OCI-LY7 (cell line): ENCODE measurements at regions of chr3 and their contacts with region 1.

Region 1: DNA sequence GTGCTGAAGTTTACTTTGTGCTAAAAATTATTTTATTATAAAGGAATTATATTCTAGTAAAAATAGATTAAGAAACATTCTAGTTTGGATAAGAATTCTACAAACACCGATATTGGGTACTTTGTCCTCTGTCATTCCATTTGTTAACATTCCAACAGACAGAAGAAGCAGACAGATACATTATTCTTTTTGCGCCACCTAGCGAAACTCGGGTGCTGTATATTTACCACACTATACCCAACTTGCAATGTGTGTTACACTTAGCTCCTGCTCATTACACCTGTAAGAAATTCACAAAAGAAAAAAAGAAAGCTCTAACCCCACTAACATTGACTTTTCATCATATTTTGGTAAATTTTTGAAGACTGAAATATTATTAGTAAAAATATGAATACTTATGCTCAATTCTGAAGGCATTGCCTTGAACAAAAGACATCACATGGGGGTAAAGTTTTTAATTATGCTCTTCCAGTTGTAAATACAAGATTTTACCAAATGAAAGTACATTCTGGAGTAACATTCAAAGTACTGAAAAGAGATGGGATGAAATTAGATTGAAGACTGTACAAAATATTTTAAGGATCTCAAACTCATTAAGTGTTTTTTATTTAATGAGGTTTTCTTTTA is 136.5 kb upstream of the MLF1 start:
- DNase-seq: peak; percentile 72
- H3K4me3 ChIP-seq: no peak overlapping the region
- H3K27ac ChIP-seq: no peak overlapping the region
- H3K4me1 ChIP-seq: no peaks in the 10 kb centered on the region
- CTCF ChIP-seq: peak; percentile 98

Region 2: DNA sequence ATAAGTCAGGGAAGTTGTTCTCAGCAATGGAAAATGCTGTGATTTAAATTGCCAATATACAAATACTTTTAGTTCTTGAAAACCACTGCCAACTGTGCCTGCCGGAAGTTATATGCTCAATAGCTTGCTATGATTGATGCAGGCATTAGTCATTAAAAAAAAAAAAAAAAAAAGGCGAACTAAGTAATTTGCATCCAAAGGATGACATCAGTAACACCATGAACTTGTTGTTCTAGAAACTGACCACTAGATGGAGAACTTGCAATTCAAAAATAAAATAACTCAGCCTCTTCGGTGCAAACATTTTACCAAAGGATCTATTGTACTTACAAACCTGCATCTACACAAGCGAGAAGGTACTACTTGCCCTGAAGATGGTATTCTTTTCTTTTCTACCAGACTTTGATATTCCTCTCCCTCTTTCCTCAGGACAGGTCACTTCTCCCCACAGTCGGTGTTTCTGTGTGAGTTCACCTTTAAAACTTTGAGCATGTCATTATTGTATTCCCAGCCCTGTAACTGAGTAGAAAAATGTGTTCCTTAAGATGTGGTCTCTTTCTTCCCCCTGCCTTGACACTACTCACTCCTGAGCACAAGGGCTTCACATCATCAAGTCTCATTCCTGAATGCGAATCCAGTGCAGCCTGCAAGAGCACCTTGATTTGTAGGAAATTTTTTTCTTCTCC is 816.3 kb before region 1 on chr3:
- CTCF ChIA-PET with region 1: no interaction called
- POLR2A ChIA-PET with region 1: no interaction called
- intact Hi-C with region 1: loop called (anchors 10 kb)
- DNase-seq: peak; percentile 60
- H3K4me3 ChIP-seq: no peak overlapping the region
- H3K27ac ChIP-seq: no peak overlapping the region
- H3K4me1 ChIP-seq: no peaks in the 10 kb centered on the region
- CTCF ChIP-seq: peak; percentile 83

Region 3: GRCh38 chr3:157865352-157866000 is 569.0 kb before region 1 on chr3:
- CTCF ChIA-PET with region 1: no interaction called
- POLR2A ChIA-PET with region 1: interaction called, 3 read pairs
- intact Hi-C with region 1: loop called (anchors 2 kb)
- DNase-seq: peak; percentile 57
- H3K4me3 ChIP-seq: no peak overlapping the region
- H3K27ac ChIP-seq: no peak overlapping the region
- H3K4me1 ChIP-seq: no peaks in the 10 kb centered on the region
- CTCF ChIP-seq: peak; percentile 94

Region 4: GRCh38 chr3:158097593-158098308 is 336.8 kb before region 1 on chr3:
- CTCF ChIA-PET with region 1: no interaction called
- POLR2A ChIA-PET with region 1: no interaction called
- intact Hi-C with region 1: loop called (anchors 5 kb)
- DNase-seq: peak; percentile 84
- H3K4me3 ChIP-seq: peak overlapping the region; percentile 72
- H3K27ac ChIP-seq: peak overlapping the region; percentile 2
- H3K4me1 ChIP-seq: peaks cover 12% of the 10 kb centered on the region
- CTCF ChIP-seq: no peak

Region 5: DNA sequence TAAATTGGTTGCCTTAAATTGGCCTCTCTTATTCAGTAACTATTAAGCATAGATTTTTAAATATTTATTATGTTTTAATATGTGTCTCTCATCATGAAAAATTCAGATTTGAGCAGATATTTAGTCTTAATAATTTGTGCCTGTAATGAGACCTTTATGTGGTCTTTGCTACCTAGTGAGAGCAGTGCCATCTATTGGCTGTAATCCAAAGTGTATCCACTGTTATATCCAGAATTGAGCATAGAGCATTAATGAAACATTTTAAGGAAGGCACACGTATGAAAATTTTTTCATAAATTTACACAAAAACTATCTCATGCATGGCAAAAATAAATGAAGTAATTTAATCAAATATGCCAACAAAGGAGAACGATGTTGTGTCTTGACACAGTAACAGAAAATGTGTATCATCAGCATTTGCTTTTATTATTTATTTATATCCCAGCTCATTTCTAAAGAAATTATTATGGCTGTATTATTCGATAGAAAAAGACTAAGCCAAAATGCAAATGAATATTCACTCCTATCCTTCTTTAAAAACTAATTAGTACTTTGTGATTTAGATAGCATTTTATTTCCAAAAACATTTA is 121.1 kb before region 1 on chr3:
- CTCF ChIA-PET with region 1: no interaction called
- POLR2A ChIA-PET with region 1: no interaction called
- intact Hi-C with region 1: loop called (anchors 5 kb)
- DNase-seq: peak; percentile 52
- H3K4me3 ChIP-seq: no peak overlapping the region
- H3K27ac ChIP-seq: no peak overlapping the region
- H3K4me1 ChIP-seq: no peaks in the 10 kb centered on the region
- CTCF ChIP-seq: peak; percentile 94

Region 6: DNA sequence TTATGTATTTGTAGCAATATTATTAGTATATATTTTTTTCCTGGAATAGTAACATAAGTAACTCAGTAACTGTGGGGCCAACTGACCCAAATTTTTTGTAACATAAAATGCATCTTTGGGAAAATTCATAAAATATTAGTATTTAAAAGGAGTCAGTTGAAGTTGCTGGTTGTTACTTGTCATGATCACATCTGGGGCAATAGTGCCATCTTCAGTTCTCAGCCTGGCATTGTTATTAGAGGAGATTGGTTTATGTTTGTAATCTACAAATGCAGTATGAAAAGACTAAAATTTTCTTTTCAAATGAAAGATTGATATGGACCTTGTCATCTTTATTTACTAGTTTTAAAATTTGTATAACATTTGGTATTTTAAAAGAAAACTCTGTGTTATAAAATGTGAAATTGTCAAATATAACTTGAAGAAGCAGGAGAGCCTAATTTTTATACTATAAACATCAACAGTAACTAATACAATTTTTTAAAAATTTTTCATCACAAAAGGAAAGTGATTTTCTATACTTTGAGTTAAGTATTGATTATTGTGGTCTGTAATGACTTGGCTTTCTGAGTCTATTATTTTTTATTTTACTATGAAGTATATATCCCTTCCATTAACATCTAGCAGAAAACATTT is 97.7 kb after region 1 on chr3:
- CTCF ChIA-PET with region 1: no interaction called
- POLR2A ChIA-PET with region 1: no interaction called
- intact Hi-C with region 1: loop called (anchors 5 kb)
- DNase-seq: peak; percentile 29
- H3K4me3 ChIP-seq: no peak overlapping the region
- H3K27ac ChIP-seq: no peak overlapping the region
- H3K4me1 ChIP-seq: no peaks in the 10 kb centered on the region
- CTCF ChIP-seq: peak; percentile 79